Transverse colon (tissue), 4 donors: ENCODE measurements at regions of chr4 and their contacts with region 1.

Region 1: GRCh38 chr4:115249808-115250207 is 136.4 kb upstream of the NDST4 start:
- DNase-seq: no peak
- H3K4me3 ChIP-seq: no peak overlapping the region
- H3K27ac ChIP-seq: no peak overlapping the region
- H3K4me1 ChIP-seq: no peaks in the 10 kb centered on the region
- H3K27me3 ChIP-seq: no peaks in the 10 kb centered on the region
- CTCF ChIP-seq: no peak
- EP300 ChIP-seq: no peak
- POLR2A ChIP-seq: no peak

Region 2: DNA sequence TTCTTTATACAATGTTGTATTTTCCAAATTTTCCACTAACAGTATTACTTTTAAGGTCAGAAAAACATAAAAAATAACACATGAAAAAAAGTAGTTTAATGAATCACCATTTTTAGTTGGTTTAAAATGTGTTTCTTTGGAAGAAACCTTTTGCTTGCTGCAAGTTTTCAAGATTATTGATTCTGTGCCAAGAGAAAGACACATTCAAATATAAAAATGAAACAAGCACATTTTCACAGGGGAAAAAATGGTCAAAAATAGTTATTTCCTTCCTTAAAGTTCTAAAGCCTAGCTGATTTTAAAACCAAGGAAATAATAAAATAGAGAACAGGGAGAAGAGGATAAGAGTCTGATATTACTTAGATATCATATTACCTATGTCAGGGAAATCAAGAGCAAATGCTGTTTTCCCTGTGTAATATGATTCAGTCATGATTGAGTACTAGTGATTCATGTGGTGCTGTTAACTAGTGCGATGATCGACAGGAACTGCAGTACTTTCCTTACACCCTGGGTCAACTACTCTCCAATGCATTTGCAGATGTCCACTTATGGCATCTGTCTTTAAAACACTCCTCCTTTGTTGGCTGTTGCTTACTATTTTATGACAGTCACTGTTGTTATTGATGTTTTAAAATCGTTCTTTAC is 1592.1 kb before region 1 on chr4:
- in situ Hi-C with region 1: no loop called
- intact Hi-C with region 1: no loop called
- DNase-seq: no peak
- H3K4me3 ChIP-seq: no peak overlapping the region
- H3K27ac ChIP-seq: no peak overlapping the region
- H3K4me1 ChIP-seq: peaks cover 0 to 25% (median 0%) of the 10 kb centered on the region in 4 donors
- H3K27me3 ChIP-seq: no peaks in the 10 kb centered on the region
- CTCF ChIP-seq: no peak
- EP300 ChIP-seq: no peak
- POLR2A ChIP-seq: no peak

Region 3: DNA sequence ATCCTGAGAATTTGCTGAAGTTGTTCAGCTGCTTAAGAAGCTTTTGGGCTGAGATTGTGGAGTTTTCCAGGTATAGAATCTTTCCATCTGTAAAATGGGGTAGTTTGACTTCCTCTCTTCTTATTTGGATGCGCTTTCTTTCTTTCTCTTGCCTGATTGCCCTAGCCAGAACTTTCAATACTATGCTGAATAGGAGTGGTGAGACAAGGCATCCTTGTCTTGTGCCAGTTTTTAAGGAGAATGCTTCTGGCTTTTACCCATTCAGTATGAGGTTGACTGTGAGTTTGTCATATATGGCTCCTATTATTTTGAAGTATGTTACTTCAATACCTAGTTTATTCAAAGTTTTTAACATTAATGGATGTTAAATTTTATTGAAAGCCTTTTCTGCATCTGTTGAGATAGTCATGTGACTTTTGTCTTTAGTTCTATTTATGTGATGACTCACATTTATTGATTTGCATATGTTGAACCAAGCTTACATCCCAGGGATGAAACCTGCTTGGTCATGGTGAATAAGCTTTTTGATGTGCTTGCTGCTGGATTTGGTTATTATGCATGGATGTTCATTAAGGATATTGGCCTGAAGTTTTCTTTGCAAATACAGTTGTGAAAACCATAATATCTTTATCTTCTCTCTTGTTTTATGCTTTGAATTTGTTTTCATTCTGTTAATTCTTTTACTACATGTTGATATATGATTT is 437.4 kb after region 1 on chr4:
- in situ Hi-C with region 1: no loop called
- intact Hi-C with region 1: loop called (anchors 10 kb)
- DNase-seq: no peak
- H3K4me3 ChIP-seq: no peak overlapping the region
- H3K27ac ChIP-seq: no peak overlapping the region
- H3K4me1 ChIP-seq: no peaks in the 10 kb centered on the region
- H3K27me3 ChIP-seq: no peaks in the 10 kb centered on the region
- CTCF ChIP-seq: no peak
- EP300 ChIP-seq: no peak
- POLR2A ChIP-seq: no peak